Activated CD4-positive, alpha-beta T cell treated with anti-CD3 and anti-CD28 coated beads for 36 hours (primary cell): ENCODE measurements at regions of chr7 and their contacts with region 1.

Region 1: GRCh38 chr7:132654150-132654549 is 77.9 kb upstream of the PLXNA4 start:
- DNase-seq: peak; percentile 31
- ATAC-seq: peak; percentile 28
- H3K4me3 Mint-ChIP-seq: no peak overlapping the region
- H3K27ac Mint-ChIP-seq: peak overlapping the region; percentile 39
- H3K4me1 Mint-ChIP-seq: peaks cover 44% of the 10 kb centered on the region
- H3K27me3 Mint-ChIP-seq: no peaks in the 10 kb centered on the region

Region 2: GRCh38 chr7:132643302-132643701 is 10.8 kb before region 1 on chr7:
- CTCF ChIA-PET with region 1: no interaction called
- POLR2A ChIA-PET with region 1: no interaction called
- intact Hi-C with region 1: no loop called
- DNase-seq: no peak
- ATAC-seq: no peak
- H3K4me3 Mint-ChIP-seq: no peak overlapping the region
- H3K27ac Mint-ChIP-seq: no peak overlapping the region
- H3K4me1 Mint-ChIP-seq: no peaks in the 10 kb centered on the region
- H3K27me3 Mint-ChIP-seq: no peaks in the 10 kb centered on the region

Region 3: GRCh38 chr7:132666071-132666774 is 12.1 kb after region 1 on chr7:
- CTCF ChIA-PET with region 1: interaction called, 15 read pairs
- POLR2A ChIA-PET with region 1: interaction called, 6 read pairs
- intact Hi-C with region 1: loop called in 1 of 2 experiments (anchors 1 kb)
- DNase-seq: peak; percentile 43
- ATAC-seq: peak; percentile 92
- H3K4me3 Mint-ChIP-seq: no peak overlapping the region
- H3K27ac Mint-ChIP-seq: peak overlapping the region; percentile 74
- H3K4me1 Mint-ChIP-seq: peaks cover 12% of the 10 kb centered on the region
- H3K27me3 Mint-ChIP-seq: no peaks in the 10 kb centered on the region

Region 4: DNA sequence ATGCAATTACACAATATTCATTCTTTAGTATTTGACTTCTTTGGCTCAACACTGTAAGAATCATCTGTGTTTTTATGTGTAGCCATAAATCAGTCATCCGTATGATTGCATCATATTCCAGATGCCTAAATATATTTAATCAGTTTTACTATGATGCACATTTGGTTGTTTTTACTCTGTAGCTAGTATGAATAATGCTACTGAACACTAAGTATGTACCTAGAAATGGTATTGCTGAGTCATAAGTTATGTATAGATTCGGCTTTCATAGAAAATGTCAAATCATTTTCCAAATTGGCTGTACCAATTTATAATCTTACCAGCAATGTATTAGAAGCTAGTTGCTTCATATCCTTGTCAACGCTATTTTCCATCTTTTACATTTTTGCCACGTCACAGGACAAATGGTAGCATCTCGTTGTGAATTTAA is 119.4 kb after region 1 on chr7:
- CTCF ChIA-PET with region 1: no interaction called
- POLR2A ChIA-PET with region 1: no interaction called
- intact Hi-C with region 1: loop called (anchors 5 kb)
- DNase-seq: no peak
- ATAC-seq: peak; percentile 70
- H3K4me3 Mint-ChIP-seq: no peak overlapping the region
- H3K27ac Mint-ChIP-seq: peak overlapping the region; percentile 1
- H3K4me1 Mint-ChIP-seq: peaks cover 46% of the 10 kb centered on the region
- H3K27me3 Mint-ChIP-seq: peaks cover 2% of the 10 kb centered on the region